ENCODE measurements at regions of chr7 and their contacts with region 1.

Region 1: GRCh38 chr7:105060437-105060836 is 46.4 kb downstream of the KMT2E start:
- DNase-seq: no peak
- ATAC-seq: no peak
- H3K4me3 ChIP-seq: no peak overlapping the region
- H3K4me3 Mint-ChIP-seq: no peak overlapping the region
- H3K27ac ChIP-seq: peak overlapping the region in 1 of 2 donors; percentile 39
- H3K27ac Mint-ChIP-seq: no peak overlapping the region
- H3K4me1 ChIP-seq: no peaks in the 10 kb centered on the region
- H3K4me1 Mint-ChIP-seq: peaks cover 49% of the 10 kb centered on the region
- H3K27me3 ChIP-seq: no peaks in the 10 kb centered on the region
- H3K27me3 Mint-ChIP-seq: no peaks in the 10 kb centered on the region
- CTCF ChIP-seq: no peak

Region 2: DNA sequence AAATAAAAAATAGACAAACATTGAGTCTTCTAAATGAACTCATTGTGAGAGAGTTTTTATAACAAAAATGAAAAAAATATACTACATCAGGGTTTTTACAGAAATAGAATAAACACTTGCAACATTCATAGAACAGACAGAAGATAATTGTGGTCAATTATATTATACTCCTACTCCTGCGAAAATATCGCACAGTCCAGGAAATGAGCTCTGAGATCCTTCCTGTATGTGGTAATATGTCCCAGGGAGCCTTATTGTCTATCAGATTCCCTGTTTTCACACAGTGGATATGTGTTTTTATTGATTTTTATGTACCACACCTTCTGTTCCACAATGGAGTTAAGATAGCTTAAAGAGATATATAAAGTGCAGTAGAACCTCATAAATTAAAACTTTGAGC is 1043.4 kb before region 1 on chr7:
- CTCF ChIA-PET with region 1: no interaction called
- POLR2A ChIA-PET with region 1: no interaction called
- intact Hi-C with region 1: no loop called
- DNase-seq: no peak
- ATAC-seq: no peak
- H3K4me3 ChIP-seq: no peak overlapping the region
- H3K4me3 Mint-ChIP-seq: no peak overlapping the region
- H3K27ac ChIP-seq: no peak overlapping the region
- H3K27ac Mint-ChIP-seq: no peak overlapping the region
- H3K4me1 ChIP-seq: no peaks in the 10 kb centered on the region
- H3K4me1 Mint-ChIP-seq: no peaks in the 10 kb centered on the region
- H3K27me3 ChIP-seq: no peaks in the 10 kb centered on the region
- H3K27me3 Mint-ChIP-seq: peaks cover 6% of the 10 kb centered on the region
- CTCF ChIP-seq: no peak

Region 3: DNA sequence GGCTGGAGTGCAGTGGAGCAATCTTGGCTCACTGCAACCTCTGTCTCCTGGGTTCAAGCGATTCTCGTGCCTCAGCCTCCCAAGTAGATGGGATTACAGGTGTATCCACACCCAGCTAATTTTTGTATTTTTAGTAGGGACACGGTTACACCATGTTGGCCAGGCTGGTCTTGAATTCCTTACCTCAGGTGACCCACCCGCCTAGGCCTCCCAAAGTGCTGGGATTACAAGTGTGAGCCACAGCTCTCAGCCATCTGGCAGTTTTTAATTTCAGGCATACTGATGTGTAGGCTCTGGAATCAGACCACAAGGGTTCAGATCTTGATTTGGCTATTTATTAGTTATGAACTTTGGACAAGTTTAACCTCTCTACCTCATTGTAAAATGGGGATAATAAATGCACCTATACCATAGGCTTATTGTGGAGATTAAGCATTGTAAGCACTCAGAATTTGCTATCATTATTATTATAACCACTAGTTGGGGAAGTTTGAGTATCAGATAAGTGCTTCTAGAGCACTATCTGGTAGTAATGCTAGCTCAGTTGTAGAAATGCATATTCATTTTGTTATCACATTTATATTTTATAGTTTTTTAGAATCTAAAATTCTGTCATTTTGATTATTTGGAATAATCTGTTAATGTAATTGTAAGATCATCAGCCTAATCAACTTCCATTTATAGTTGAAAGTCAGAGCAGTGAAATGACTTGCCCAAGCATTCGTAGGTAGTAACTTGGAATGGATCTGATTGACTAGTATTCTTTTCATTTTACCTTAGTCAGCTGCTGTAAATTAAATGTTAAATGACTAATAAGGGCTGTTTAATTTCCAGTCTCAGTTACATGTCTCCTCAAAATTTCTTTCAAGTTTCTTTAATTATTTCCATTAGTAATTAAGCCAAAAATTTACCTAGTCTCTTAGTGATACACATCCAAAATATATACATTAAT is 23.9 kb before region 1 on chr7:
- CTCF ChIA-PET with region 1: interaction called, 7 read pairs
- POLR2A ChIA-PET with region 1: interaction called, 3 read pairs
- intact Hi-C with region 1: loop called (anchors 2 kb)
- DNase-seq: no peak
- ATAC-seq: no peak
- H3K4me3 ChIP-seq: no peak overlapping the region
- H3K4me3 Mint-ChIP-seq: no peak overlapping the region
- H3K27ac ChIP-seq: peak overlapping the region in 1 of 2 donors; percentile 58
- H3K27ac Mint-ChIP-seq: peak overlapping the region; percentile 22
- H3K4me1 ChIP-seq: peaks cover 27 to 36% of the 10 kb centered on the region in 2 donors
- H3K4me1 Mint-ChIP-seq: peaks cover 47% of the 10 kb centered on the region
- H3K27me3 ChIP-seq: no peaks in the 10 kb centered on the region
- H3K27me3 Mint-ChIP-seq: no peaks in the 10 kb centered on the region
- CTCF ChIP-seq: no peak

Region 4: DNA sequence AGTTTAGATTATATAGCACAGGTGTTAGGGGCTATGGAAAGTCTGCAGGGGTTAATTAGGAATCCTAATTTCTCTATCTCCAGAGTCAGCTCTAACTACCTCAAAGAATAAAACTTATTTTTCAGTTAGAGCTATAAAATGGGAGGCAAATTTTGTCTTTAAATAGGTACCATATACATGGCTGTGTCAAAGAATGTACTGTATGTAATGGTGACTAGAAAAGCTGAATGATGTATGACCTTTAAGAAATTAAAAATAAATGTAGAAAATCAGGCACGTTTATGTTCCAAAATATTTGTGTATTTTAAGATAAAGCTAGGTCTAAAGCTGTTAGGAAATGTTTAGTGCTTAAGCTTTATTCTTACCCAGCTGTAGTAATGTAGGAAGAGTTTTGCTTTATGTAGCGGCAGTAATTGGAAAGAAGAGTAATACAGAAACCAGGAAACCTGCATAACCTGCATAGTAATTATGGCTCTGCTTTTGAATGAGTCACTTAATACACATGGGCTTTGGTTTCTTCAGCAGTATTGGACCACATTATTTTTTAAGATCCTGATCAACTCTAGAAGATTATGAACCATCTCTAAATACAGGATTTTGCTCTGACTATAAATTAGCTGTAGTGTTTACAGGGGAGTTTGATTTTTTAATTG is 38.6 kb after region 1 on chr7:
- CTCF ChIA-PET with region 1: no interaction called
- POLR2A ChIA-PET with region 1: interaction called, 3 read pairs
- intact Hi-C with region 1: loop called (anchors 5 kb)
- DNase-seq: no peak
- ATAC-seq: no peak
- H3K4me3 ChIP-seq: no peak overlapping the region
- H3K4me3 Mint-ChIP-seq: no peak overlapping the region
- H3K27ac ChIP-seq: peak overlapping the region in 1 of 2 donors; percentile 62
- H3K27ac Mint-ChIP-seq: no peak overlapping the region
- H3K4me1 ChIP-seq: no peaks in the 10 kb centered on the region
- H3K4me1 Mint-ChIP-seq: peaks cover 17% of the 10 kb centered on the region
- H3K27me3 ChIP-seq: no peaks in the 10 kb centered on the region
- H3K27me3 Mint-ChIP-seq: no peaks in the 10 kb centered on the region
- CTCF ChIP-seq: no peak

Measured in B cell (primary cell).